Activated T-helper 1 cell treated with anti-CD3 and anti-CD28 coated beads, Interleukin-12 subunit alpha, Interleukin-12 subunit beta, Interleukin-2, Interleukin-4 antibody, amounts not matched to agents 30 ng/mL and 10 ng/mL and 1 ng/mL, durations not matched to agents 14 hours and 24 hours and 36 hours (primary cell): ENCODE measurements at regions of chr2 and their contacts with region 1.

Region 1: DNA sequence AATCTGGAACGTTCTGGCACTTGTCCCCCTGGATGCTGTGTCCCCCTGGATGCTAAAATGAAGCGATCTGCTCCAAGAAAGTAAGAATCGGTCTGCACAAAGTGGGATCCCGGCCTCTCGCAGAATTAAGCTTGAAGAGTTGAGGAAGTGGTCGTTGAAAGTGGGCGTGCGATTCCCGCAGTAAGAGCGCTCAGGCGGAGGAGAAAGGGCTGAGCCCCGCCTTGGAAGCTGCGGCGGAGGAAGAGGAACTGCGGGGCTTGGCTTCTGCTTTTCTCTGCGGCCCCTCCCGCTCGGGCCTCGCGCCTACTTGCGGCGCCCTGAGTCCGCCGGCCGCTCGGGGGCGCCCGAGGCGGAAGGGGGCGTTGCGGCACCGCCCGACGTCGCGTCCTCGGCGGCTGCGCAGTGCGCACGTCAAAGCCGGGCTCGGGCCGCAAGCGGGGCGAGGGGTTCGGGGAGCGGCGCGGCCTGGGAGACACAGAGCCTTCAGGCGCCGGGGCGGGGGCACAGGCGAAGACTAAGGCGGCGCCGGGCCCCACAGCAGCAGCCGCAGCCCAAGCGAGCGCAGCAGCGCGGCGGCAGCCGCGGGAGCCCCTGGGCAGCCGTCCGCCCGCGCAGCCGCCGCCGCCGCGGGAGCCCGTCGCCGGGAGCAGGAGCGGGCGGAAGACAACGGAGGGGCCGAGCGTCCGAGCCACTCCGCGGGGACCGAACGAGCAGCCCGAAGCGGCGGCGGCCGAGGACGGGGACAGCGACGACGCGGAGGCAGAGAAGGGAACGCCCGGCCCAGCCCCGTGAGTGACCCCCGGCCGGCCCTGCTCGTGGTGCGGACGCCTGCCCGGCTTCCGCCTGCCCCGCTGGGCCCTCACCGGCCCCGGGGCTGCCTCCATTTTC is at the start of gene CAB39:
- DNase-seq: peak; percentile 89
- H3K4me3 Mint-ChIP-seq: peak within 1 kb of the TSS; percentile 99
- H3K27ac Mint-ChIP-seq: peak within 1 kb of the TSS; percentile 98
- H3K4me1 Mint-ChIP-seq: peaks cover 44% of the 10 kb centered on the region
- H3K27me3 Mint-ChIP-seq: no peaks in the 10 kb centered on the region
- total RNA-seq, gene CAB39: 168 and 170 TPM in 2 replicates

Region 2: GRCh38 chr2:230007931-230008707 is 704.6 kb before region 1 on chr2:
- intact Hi-C with region 1: loop called (anchors 2 kb)
- DNase-seq: peak; percentile 66
- H3K4me3 Mint-ChIP-seq: no peak overlapping the region
- H3K27ac Mint-ChIP-seq: no peak overlapping the region
- H3K4me1 Mint-ChIP-seq: peaks cover 11% of the 10 kb centered on the region
- H3K27me3 Mint-ChIP-seq: no peaks in the 10 kb centered on the region

Region 3: GRCh38 chr2:230219419-230220331 is 493.0 kb before region 1 on chr2 and contains the start of gene SP110:
- intact Hi-C with region 1: loop called (anchors 2 kb)
- DNase-seq: peak; percentile 84
- H3K4me3 Mint-ChIP-seq: peak within 1 kb of the TSS; percentile 93
- H3K27ac Mint-ChIP-seq: peak within 1 kb of the TSS; percentile 95
- H3K4me1 Mint-ChIP-seq: peaks cover 76% of the 10 kb centered on the region
- H3K27me3 Mint-ChIP-seq: no peaks in the 10 kb centered on the region
- total RNA-seq, gene SP110: 141 and 142 TPM in 2 replicates

Region 4: DNA sequence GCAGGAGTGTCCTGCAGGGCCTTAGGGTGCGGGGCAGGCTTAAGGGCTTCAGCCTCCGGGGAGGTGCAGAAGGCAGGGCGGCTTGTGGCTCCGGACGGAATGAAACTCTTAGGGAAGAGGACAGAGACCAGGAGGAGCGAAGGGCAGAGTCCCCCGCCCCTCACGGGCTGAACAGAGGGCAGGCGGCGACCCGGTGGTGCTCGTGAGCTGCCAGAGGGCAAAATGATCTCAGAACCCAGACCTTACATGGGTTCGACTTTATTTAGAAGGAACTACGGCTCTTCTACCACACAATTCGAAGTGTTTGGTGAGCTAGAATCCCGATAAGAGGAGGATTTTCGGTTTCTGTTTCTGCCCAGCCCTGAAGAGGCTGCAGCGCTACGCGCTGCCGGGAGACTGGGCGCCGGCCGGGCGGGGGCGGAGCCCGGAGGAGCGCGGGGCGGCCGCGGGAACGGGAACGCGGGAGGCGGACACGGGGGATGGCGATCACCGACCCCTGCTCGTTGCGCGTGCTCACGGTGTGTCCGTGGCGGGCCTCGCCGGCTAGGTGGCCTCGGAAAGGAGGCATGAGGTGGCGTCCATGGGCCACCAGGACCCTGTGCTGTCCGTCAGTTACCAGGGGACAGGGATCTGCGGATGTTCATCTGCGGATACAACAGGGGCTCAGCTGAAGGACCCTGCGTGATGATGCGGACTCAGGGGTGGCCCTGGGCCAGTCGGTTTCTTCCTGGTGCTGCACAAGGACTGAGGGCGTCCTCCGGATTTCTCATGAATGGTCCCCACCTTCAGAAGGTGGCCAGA is 300.9 kb before region 1 on chr2:
- intact Hi-C with region 1: loop called (anchors 2 kb)
- DNase-seq: peak; percentile 76
- H3K4me3 Mint-ChIP-seq: peak overlapping the region; percentile 93
- H3K27ac Mint-ChIP-seq: peak overlapping the region; percentile 99
- H3K4me1 Mint-ChIP-seq: peaks cover 79% of the 10 kb centered on the region
- H3K27me3 Mint-ChIP-seq: no peaks in the 10 kb centered on the region

Region 5: GRCh38 chr2:230668184-230668938 is 44.3 kb before region 1 on chr2:
- intact Hi-C with region 1: loop called (anchors 2 kb)
- DNase-seq: no peak
- H3K4me3 Mint-ChIP-seq: peak overlapping the region; percentile 56
- H3K27ac Mint-ChIP-seq: peak overlapping the region; percentile 91
- H3K4me1 Mint-ChIP-seq: peaks cover 77% of the 10 kb centered on the region
- H3K27me3 Mint-ChIP-seq: no peaks in the 10 kb centered on the region

Region 6: DNA sequence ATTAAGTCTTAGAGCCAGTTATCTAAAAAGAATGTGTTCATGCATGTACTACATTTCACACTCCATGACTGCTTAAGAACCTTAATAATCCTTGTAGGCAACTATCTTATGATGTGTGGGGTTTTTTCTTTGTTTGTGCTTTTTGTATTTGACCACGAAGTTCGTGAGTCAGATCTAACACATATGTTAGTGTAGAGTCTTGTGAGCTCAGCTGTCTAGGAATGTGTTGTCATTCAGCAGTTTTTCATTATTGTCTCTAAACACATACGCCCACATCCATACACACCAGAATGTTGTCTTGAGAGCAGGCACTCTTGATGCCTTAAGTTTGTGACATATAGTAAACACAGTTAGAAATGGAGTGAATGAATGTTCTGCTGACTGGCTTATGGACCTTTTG is 38.4 kb after region 1 on chr2:
- intact Hi-C with region 1: loop called (anchors 1 kb)
- DNase-seq: peak; percentile 12
- H3K4me3 Mint-ChIP-seq: no peak overlapping the region
- H3K27ac Mint-ChIP-seq: peak overlapping the region; percentile 83
- H3K4me1 Mint-ChIP-seq: peaks cover 77% of the 10 kb centered on the region
- H3K27me3 Mint-ChIP-seq: no peaks in the 10 kb centered on the region

Region 7: DNA sequence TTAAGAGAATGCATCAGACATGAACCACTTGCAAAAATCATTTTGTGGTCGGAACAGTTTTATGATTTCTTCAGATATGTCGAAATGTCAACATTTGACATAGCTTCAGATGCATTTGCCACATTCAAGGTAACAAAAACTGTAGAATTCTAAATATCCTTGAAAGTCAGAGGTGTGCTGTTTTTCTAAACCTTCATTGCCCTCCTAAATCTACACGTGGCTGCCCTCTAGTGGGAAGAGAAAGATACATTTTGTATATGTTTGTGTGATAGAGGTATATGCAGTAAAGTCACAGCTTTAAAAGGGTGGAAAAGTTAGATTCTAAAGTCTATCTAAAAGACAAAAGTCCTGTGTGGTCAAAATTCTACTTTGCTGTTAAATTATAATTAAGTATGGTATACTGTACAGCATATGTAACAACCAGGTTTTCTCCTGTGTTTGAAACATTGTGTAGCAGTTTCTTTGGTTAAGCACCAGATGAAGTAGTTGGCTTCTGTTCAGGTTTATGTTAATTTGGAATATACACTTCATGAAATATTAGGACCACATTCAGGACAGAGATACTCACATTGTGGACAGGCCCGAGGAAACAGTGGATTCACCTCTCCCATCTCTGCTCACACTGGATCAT is 86.2 kb after region 1 on chr2:
- intact Hi-C with region 1: loop called (anchors 1 kb)
- DNase-seq: peak; percentile 27
- H3K4me3 Mint-ChIP-seq: no peak overlapping the region
- H3K27ac Mint-ChIP-seq: no peak overlapping the region
- H3K4me1 Mint-ChIP-seq: peaks cover 26% of the 10 kb centered on the region
- H3K27me3 Mint-ChIP-seq: peaks cover under 1% of the 10 kb centered on the region

Region 8: GRCh38 chr2:231436957-231437356 is 724.3 kb after region 1 on chr2:
- intact Hi-C with region 1: no loop called
- DNase-seq: no peak
- H3K4me3 Mint-ChIP-seq: no peak overlapping the region
- H3K27ac Mint-ChIP-seq: no peak overlapping the region
- H3K4me1 Mint-ChIP-seq: peaks cover 5% of the 10 kb centered on the region
- H3K27me3 Mint-ChIP-seq: no peaks in the 10 kb centered on the region

Region 9: DNA sequence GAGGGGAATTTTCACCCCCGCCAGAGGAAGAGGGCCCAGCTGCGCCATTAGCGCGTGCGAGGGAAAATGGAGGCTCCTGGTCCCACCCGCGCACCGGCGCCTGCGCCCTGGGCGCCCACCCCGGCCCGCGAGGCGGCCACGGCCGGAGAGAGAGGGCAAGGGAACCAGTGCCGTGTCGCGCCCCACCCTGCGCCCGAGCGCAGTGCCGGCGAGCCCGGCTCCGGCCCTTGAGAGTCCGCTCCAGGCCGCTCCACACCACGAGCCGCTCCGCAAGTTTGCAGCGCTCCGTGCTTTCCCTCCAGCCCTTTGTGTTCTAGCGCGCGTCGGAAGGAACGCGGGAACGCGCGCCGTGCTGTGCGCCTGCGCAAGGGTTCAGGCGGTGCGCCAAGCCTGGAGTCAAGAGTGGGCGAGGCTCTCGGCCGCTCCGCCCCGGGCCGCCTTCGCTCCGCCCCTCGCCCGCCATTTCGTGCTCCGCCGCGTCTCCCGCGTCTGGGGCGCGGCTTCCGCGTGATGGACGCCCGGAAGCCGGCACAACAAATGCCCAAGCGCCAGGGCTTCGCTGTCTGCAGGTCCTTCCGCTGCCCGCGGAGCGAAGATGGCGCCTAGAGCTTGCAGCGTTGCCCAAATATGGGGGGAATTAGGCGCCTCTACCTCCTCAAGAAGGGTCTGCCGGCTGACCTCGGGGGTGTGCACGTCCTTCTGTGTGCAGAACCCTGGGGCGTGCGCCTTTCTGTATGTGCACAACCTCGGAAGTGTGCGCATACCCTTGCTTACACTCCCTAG is 949.5 kb after region 1 on chr2:
- intact Hi-C with region 1: no loop called
- DNase-seq: peak; percentile 98
- H3K4me3 Mint-ChIP-seq: peak overlapping the region; percentile 74
- H3K27ac Mint-ChIP-seq: peak overlapping the region; percentile 96
- H3K4me1 Mint-ChIP-seq: peaks cover 25% of the 10 kb centered on the region
- H3K27me3 Mint-ChIP-seq: no peaks in the 10 kb centered on the region